K562 (cell line): ENCODE measurements at regions of chr7 and their contacts with region 1.

Region 1: GRCh38 chr7:22726345-22727185 is 435 bp upstream of the IL6 start:
- DNase-seq: peak; percentile 68 to 89 (median 72)
- ATAC-seq: peak; percentile 88
- H3K4me3 ChIP-seq: peak overlapping the region; percentile 33
- H3K27ac ChIP-seq: peak overlapping the region; percentile 42
- H3K4me1 ChIP-seq: peaks cover 16 to 58% of the 10 kb centered on the region in 2 experiments
- H3K27me3 ChIP-seq: no peaks in the 10 kb centered on the region
- CTCF ChIP-seq: peak; percentile 78 to 87 (median 82)
- EP300 ChIP-seq: peak; percentile 26; the same call in 1 of the 2 replicates
- POLR2A ChIP-seq: no peak
- RAD21 ChIP-seq: peak; percentile 79 to 92

Region 2: DNA sequence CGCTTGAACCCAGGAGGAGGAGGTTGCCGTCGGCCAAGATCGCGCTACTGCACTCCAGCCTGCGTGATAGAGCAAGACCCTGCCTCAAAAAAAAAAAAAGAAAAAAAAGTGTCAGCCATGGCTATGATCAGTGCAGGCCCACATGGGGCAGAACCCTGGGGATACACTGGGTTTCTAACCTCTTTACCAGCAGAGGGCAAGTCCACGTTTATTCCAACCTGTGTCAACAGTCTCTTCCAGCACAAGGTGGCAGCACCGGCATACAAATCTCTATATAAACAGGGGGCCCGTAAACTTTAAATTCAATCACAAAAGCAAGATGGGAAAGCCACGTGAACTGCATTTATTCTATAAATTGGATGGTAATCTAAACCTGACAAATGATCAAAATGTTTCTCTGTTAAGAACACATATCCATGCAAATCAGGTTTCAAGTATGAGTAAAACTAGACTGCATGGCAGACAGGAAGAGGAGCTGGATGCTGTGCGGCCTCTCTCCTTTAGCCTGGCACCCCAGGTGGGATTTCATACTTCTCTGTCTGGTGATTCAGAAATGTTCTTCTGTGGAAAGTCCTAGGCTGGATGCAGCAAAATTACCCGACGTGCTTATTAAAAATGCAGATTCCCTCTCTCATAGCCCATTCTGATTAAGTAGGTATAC is 166.6 kb before region 1 on chr7:
- CTCF ChIA-PET with region 1: interaction called, 52 read pairs
- POLR2A ChIA-PET with region 1: interaction called, 11 read pairs
- in situ Hi-C with region 1: loop called (anchors 5 kb)
- intact Hi-C with region 1: loop called (anchors 1 kb)
- DNase-seq: peak; percentile 75 to 88 (median 80)
- ATAC-seq: peak; percentile 83
- H3K4me3 ChIP-seq: no peak overlapping the region
- H3K27ac ChIP-seq: no peak overlapping the region
- H3K4me1 ChIP-seq: peaks cover 15 to 36% of the 10 kb centered on the region in 2 experiments
- H3K27me3 ChIP-seq: no peaks in the 10 kb centered on the region
- CTCF ChIP-seq: peak; percentile 91 to 99 (median 99)
- EP300 ChIP-seq: no peak
- POLR2A ChIP-seq: no peak
- RAD21 ChIP-seq: peak; percentile 92 to 95

Region 3: GRCh38 chr7:22677680-22678079 is 48.9 kb before region 1 on chr7:
- CTCF ChIA-PET with region 1: no interaction called
- POLR2A ChIA-PET with region 1: interaction called, 3 read pairs
- in situ Hi-C with region 1: no loop called
- intact Hi-C with region 1: loop called (anchors 5 kb)
- DNase-seq: no peak
- ATAC-seq: no peak
- H3K4me3 ChIP-seq: no peak overlapping the region
- H3K27ac ChIP-seq: peak overlapping the region; percentile 48
- H3K4me1 ChIP-seq: peaks cover 12 to 84% of the 10 kb centered on the region in 2 experiments
- H3K27me3 ChIP-seq: no peaks in the 10 kb centered on the region
- CTCF ChIP-seq: no peak
- EP300 ChIP-seq: no peak
- POLR2A ChIP-seq: no peak
- RAD21 ChIP-seq: no peak

Region 4: GRCh38 chr7:22712999-22713398 is 13.6 kb before region 1 on chr7:
- CTCF ChIA-PET with region 1: interaction called, 4 read pairs
- POLR2A ChIA-PET with region 1: interaction called, 21 read pairs
- in situ Hi-C with region 1: no loop called
- intact Hi-C with region 1: no loop called
- DNase-seq: no peak
- ATAC-seq: no peak
- H3K4me3 ChIP-seq: no peak overlapping the region
- H3K27ac ChIP-seq: no peak overlapping the region
- H3K4me1 ChIP-seq: peaks cover 11 to 33% of the 10 kb centered on the region in 2 experiments
- H3K27me3 ChIP-seq: no peaks in the 10 kb centered on the region
- CTCF ChIP-seq: no peak
- EP300 ChIP-seq: no peak
- POLR2A ChIP-seq: no peak
- RAD21 ChIP-seq: no peak

Region 5: GRCh38 chr7:22751341-22751740 is 24.8 kb after region 1 on chr7:
- CTCF ChIA-PET with region 1: no interaction called
- POLR2A ChIA-PET with region 1: no interaction called
- in situ Hi-C with region 1: no loop called
- intact Hi-C with region 1: no loop called
- DNase-seq: peak in 1 of 4 experiments; percentile 34
- ATAC-seq: peak; percentile 62; the same call in 1 of the 3 replicates
- H3K4me3 ChIP-seq: no peak overlapping the region
- H3K27ac ChIP-seq: no peak overlapping the region
- H3K4me1 ChIP-seq: no peaks in the 10 kb centered on the region
- H3K27me3 ChIP-seq: no peaks in the 10 kb centered on the region
- CTCF ChIP-seq: no peak
- EP300 ChIP-seq: no peak
- POLR2A ChIP-seq: no peak
- RAD21 ChIP-seq: no peak

Region 6: DNA sequence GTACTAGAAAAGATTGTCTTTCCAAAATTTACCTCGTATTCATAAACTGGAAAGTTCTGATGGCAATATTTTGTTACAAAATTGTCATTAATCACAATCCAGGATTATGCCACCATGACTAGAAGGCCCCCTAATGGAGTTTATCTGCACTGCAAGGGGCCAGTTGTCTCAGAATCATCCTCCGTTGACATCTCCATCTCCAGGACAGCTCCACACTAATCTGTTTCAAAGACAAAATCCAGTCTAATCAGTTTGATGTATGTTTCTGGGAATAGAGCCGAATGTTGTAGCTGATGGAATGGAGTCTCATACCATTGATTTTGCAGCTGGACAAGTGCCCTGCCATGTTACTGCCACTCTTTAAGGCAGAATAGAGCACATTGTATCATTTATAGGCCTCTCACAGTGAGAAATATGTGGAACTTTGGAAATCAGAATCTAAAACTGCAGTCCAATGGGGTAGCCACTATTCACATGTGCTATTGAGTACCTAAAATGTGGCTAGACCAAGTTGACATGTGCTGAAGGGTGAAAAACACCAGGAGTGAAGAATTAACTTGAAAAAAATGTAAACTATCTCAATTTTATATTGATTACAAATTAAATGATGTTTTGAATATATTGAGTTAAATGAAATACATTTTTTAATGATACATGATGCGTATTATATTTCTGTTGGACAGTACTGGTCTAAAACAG is 134.4 kb after region 1 on chr7:
- CTCF ChIA-PET with region 1: no interaction called
- POLR2A ChIA-PET with region 1: no interaction called
- in situ Hi-C with region 1: no loop called
- intact Hi-C with region 1: loop called (anchors 5 kb)
- DNase-seq: peak; percentile 58 to 63 (median 59)
- ATAC-seq: peak; percentile 72
- H3K4me3 ChIP-seq: no peak overlapping the region
- H3K27ac ChIP-seq: peak overlapping the region; percentile 45; the same call in 2 of the 3 replicates
- H3K4me1 ChIP-seq: peaks cover 3 to 16% of the 10 kb centered on the region in 2 experiments; a peak in 4 of 5 replicates
- H3K27me3 ChIP-seq: no peaks in the 10 kb centered on the region
- CTCF ChIP-seq: peak; percentile 68 to 73 (median 73)
- EP300 ChIP-seq: no peak
- POLR2A ChIP-seq: no peak
- RAD21 ChIP-seq: peak; percentile 27 to 60; a peak in 2 of 4 replicates

Region 7: GRCh38 chr7:23072048-23072447 is 345.5 kb after region 1 on chr7:
- CTCF ChIA-PET with region 1: no interaction called
- POLR2A ChIA-PET with region 1: no interaction called
- in situ Hi-C with region 1: no loop called
- intact Hi-C with region 1: loop called (anchors 5 kb)
- DNase-seq: peak in 1 of 4 experiments; percentile 40
- ATAC-seq: peak; percentile 80
- H3K4me3 ChIP-seq: no peak overlapping the region
- H3K27ac ChIP-seq: no peak overlapping the region
- H3K4me1 ChIP-seq: peaks cover 0 to 20% of the 10 kb centered on the region in 2 experiments; a peak in 3 of 5 replicates
- H3K27me3 ChIP-seq: no peaks in the 10 kb centered on the region
- CTCF ChIP-seq: peak; percentile 34 to 66 (median 53); a peak in 4 of 6 replicates
- EP300 ChIP-seq: no peak
- POLR2A ChIP-seq: no peak
- RAD21 ChIP-seq: peak; percentile 58 to 79